ENCODE measurements at regions of chr19 and their contacts with region 1.

Region 1: DNA sequence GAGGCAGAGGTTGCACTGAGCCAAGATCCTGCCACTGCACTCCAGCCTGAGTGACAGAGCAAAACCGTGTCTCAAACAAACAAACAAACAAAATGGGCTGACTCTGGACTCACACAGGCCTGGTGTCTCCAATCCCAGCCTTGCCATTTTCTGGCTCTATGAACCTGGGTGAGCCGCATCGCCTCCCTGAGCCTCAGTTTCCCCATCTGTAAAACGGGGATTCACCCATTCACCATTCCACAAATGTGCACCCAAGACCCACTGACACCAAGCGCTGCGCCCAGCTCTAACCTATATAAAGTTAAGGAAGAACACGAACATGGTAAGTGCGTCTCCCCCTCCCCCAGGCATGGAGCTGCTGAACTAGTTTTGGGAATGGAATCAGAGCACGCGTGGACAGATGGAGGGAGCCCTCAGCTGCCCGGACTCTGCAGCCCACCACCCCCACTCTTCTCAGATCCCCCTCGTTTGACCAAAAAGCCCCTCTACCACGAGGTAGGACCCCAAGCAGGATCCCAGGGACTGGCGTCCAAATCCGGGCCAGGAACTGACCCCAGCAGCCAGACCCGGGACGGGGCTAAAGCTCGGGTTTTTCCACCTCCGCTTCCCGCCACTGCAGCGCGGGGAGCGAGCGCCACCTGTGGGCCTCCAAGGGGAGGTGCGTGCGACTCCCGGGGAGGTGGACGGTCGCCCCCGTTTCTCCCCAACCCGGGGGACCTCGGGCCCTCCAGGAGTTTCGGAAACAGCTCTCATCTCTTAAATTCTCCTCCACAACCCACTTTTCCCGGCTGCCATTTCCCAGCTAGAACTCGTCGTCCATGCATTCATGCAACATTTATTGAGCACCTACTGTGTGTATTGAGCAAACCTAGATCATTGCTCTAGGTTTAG is 33.0 kb upstream of the ADGRE5 start:
- DNase-seq: peak in 1 of 2 donors; percentile 77
- H3K4me3 ChIP-seq: peak overlapping the region; percentile 29 to 45
- H3K27ac ChIP-seq: no peak overlapping the region
- H3K4me1 ChIP-seq: no peaks in the 10 kb centered on the region
- H3K27me3 ChIP-seq: no peaks in the 10 kb centered on the region
- CTCF ChIP-seq: peak; percentile 89 to 99 (median 98)

Region 2: DNA sequence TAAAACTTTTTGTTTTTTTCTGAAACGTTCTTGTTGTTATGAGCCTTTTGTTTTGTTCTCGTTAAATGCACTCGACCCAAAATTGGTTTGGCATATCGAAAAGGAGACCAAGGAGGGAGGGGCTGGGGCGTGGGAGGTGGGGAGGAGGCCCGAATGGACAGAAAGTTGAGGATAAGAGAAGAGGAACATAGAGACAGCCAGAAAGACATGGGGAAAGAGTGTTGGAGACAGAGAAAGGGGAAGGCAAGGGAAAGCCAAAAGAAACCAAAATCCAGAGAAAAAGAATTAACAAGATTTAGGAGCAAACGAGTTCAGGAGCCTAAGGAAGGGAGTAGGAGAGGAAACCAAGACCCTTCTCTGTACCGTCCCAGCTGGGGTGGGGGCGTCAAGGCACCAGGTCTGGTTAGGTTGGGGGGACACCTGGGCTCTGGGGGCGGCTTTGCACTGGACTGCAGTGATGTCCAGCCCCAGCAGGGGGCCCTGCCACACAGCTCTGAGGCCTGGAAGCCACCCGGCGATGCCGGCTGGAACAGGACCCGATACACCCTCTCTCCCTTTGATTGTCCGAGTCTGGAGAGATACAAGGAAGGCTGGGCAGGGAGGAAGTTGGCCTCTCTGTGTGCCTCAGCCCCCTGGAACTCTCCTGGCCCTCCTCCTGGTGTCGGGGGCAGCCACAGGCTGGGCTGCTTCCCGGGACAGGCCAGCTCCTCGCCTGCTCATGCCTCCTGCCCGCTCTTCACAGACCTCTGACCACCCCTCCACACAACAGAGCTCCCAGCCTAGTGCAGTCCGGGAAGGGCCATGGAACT is 200.2 kb before region 1 on chr19:
- intact Hi-C with region 1: loop called (anchors 2 kb)
- DNase-seq: peak in 1 of 2 donors; percentile 82
- H3K4me3 ChIP-seq: peak overlapping the region in 1 of 2 donors; percentile 45
- H3K27ac ChIP-seq: peak overlapping the region; percentile 44 to 83
- H3K4me1 ChIP-seq: peaks cover 10 to 20% of the 10 kb centered on the region in 2 donors
- H3K27me3 ChIP-seq: no peaks in the 10 kb centered on the region
- CTCF ChIP-seq: peak; percentile 83 to 91 (median 89)

Region 3: DNA sequence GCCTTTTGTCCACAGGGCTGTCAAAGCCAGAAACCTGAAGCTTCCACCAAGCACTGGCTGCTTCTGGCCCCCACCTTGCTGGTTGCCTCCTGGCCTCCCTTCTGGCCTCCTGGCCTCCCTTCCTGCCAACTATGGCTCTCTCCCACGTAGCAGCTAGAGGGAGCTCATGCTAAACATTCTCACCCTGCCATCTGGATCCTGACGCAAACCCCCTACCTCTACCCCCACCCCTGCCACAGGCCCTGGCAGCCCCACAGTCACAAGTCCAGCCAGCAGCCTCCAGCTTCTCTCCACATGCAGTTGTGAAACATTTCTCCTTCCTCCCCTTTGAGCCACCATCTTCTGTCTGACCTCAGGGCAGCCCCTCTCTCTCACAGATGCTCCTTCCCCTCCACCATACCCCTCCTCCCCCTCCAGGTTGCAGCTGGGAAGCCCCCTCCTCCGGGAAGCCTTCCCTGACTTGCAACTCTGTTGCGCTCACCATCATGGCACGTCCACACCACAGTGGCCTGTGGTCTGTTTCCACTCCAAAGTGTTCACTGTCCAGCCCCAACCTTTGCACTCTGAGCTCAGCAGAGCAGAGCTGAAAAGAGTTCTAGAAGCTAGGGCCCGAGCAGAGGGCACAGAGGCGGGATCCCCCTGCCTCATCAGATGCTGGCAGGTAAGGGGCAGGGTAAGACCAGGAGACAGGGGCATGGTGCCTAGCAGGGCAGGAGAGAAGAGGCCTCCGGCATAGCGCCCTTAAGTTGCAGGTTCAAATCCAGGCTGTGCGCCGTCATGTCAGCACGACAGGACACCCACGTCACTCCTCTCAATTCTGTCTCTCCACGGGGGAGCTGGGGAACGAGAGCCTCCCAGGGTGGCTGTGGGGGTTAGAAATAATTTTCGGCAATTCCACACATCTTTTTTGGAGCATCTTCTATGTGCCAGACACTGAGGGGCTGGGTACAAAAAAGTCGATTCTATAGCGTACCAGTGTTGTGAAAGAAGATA is 149.6 kb before region 1 on chr19:
- intact Hi-C with region 1: loop called (anchors 1 kb)
- DNase-seq: no peak
- H3K4me3 ChIP-seq: no peak overlapping the region
- H3K27ac ChIP-seq: no peak overlapping the region
- H3K4me1 ChIP-seq: no peaks in the 10 kb centered on the region
- H3K27me3 ChIP-seq: no peaks in the 10 kb centered on the region
- CTCF ChIP-seq: no peak

Region 4: GRCh38 chr19:14405758-14406644 is 57.8 kb after region 1 on chr19:
- intact Hi-C with region 1: loop called (anchors 5 kb)
- DNase-seq: peak; percentile 31 to 89
- H3K4me3 ChIP-seq: no peak overlapping the region
- H3K27ac ChIP-seq: peak overlapping the region; percentile 71 to 75
- H3K4me1 ChIP-seq: peaks cover 2 to 8% of the 10 kb centered on the region in 2 donors
- H3K27me3 ChIP-seq: no peaks in the 10 kb centered on the region
- CTCF ChIP-seq: peak; percentile 90 to 97 (median 94)